Dorsolateral prefrontal cortex (tissue), 120 donors: ENCODE measurements at regions of chr13 and their contacts with region 1.

Region 1: GRCh38 chr13:106337096-106337850 is 198.2 kb downstream of the EFNB2 start:
- DNase-seq: no peak
- H3K4me3 ChIP-seq: no peak overlapping the region
- H3K27ac ChIP-seq: no peak overlapping the region
- H3K27me3 ChIP-seq: no peaks in the 10 kb centered on the region
- CTCF ChIP-seq: no peak

Region 2: GRCh38 chr13:106423530-106423929 is 86.3 kb after region 1 on chr13:
- intact Hi-C with region 1: no loop called
- DNase-seq: no peak
- H3K4me3 ChIP-seq: no peak overlapping the region
- H3K27ac ChIP-seq: no peak overlapping the region
- H3K27me3 ChIP-seq: no peaks in the 10 kb centered on the region
- CTCF ChIP-seq: no peak

Region 3: DNA sequence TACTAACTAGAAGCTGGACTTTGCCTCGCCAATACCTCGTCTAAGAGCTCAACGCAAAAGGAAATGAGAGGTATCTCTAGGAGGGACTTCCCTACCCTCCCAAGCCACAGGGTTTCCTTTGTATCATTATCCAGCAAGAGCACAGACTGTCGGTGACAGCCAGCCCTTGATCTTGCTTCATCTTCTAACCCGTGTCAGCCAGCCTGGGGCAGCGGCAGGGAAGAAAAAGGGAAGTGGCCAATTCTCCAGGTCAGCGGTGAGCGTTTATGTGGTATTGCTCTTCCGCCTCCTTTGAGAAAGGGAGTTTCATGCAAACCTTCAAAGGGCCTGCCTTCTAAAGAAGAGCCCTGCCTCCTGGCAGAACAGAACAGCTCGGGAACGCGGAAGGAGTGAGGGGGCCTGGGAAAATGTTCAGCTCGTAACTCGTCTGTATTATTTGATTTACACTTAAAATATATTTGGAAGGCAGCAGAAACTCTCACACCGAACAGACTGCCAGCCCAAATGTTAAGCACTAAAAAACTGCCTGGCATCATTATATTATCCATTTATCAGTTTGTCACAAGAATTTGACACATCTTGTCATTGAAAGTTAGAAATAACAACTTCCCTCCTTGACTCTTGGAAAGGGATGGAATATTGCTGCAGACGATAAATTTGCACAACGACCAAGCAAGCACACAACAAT is 156.4 kb after region 1 on chr13:
- intact Hi-C with region 1: loop called in 1 of 2 experiments (anchors 10 kb)
- DNase-seq: peak in 1 of 10 donors; percentile 26
- H3K4me3 ChIP-seq: peak overlapping the region in 28 of 59 donors; percentile 0 to 48 (median 17)
- H3K27ac ChIP-seq: peak overlapping the region in 58 of 59 donors; percentile 75 to 99 (median 97)
- H3K27me3 ChIP-seq: no peaks in the 10 kb centered on the region
- CTCF ChIP-seq: no peak